ENCODE measurements at regions of chr1 and their contacts with region 1.

Region 1: DNA sequence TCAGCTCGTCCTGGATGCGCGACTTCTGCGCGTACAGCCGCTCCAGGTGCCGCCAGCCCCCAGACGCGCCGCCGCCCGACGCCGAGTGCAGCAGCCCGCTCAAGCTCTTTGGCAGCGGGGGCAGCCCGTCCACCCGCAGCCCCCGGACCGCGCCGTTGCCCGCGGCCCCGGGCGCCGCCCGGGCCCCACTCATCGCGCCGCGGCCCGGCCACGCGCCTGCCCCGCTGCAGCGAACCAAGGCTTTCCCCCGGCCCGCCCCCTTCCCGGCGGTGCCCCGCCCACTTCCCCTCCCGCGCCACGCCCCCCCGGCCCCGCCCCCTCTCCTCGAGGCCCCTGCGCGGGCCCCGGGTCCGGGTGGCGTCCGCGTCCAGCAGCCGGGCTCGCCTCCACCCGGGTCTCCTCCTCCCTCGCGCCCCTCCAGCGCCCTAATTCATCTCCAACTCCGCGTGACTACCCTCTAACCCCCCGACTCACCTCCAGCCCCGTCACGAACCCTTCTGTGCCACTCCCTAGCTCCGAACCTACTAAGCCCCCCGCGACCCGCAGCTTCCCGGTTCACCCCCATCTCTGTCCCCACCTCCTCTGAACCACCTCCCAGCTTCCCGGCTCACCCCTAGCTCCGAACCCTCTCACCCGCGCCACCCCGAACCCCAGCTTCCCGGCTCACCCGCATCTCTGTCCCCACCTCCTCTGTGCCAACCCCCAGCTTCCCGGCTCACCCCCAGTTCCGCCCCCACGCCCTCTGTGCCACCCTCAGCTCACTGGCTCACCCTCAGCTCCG is at the start of gene FAM89A:
- DNase-seq: peak; percentile 81
- H3K4me3 Mint-ChIP-seq: peak within 1 kb of the TSS; percentile 74
- H3K27ac Mint-ChIP-seq: no peak within 1 kb of the TSS
- H3K4me1 Mint-ChIP-seq: peaks cover 29% of the 10 kb centered on the region
- H3K27me3 Mint-ChIP-seq: no peaks in the 10 kb centered on the region
- total RNA-seq, gene FAM89A: 14.3 to 15.1 TPM

Region 2: DNA sequence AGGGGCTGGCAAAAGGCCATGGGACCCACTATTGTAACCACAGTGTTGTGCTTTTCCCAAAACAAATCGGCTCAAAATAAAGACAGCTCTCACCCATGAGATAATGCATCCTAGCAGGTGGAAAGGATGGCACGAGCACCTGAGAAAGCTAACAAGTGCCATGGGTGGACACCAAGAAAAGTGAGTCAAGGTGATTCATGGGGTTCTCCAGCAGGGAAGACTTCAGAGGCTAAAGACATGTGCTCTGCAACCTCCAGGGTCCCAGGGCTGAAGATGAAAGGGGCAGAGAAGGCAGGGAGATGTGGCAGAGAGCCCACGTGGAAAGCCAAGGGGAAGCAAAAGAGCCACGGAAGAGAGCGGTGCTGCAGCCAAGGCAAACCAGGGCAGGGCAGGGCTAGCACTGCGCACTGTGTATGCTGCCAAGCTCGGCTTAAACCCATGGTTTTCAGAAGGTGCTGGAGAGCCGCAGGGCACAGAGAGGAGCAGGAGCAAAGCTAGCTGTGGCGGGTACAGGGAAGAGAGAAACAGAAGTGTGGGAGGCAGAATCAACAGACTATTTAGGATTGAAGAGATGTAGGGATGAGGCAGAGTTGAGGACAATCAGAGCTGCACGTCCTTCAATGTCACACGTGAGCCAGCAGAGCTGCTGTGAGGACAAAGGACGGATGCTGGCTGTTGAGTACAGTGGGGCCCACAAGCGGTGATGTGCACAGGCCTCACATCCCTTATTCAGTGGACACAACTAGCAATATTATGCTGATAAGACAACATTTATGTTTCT is 130.0 kb before region 1 on chr1:
- CTCF ChIA-PET with region 1: no interaction called
- POLR2A ChIA-PET with region 1: no interaction called
- intact Hi-C with region 1: no loop called
- DNase-seq: no peak
- H3K4me3 Mint-ChIP-seq: no peak overlapping the region
- H3K27ac Mint-ChIP-seq: no peak overlapping the region
- H3K4me1 Mint-ChIP-seq: no peaks in the 10 kb centered on the region
- H3K27me3 Mint-ChIP-seq: no peaks in the 10 kb centered on the region

Region 3: DNA sequence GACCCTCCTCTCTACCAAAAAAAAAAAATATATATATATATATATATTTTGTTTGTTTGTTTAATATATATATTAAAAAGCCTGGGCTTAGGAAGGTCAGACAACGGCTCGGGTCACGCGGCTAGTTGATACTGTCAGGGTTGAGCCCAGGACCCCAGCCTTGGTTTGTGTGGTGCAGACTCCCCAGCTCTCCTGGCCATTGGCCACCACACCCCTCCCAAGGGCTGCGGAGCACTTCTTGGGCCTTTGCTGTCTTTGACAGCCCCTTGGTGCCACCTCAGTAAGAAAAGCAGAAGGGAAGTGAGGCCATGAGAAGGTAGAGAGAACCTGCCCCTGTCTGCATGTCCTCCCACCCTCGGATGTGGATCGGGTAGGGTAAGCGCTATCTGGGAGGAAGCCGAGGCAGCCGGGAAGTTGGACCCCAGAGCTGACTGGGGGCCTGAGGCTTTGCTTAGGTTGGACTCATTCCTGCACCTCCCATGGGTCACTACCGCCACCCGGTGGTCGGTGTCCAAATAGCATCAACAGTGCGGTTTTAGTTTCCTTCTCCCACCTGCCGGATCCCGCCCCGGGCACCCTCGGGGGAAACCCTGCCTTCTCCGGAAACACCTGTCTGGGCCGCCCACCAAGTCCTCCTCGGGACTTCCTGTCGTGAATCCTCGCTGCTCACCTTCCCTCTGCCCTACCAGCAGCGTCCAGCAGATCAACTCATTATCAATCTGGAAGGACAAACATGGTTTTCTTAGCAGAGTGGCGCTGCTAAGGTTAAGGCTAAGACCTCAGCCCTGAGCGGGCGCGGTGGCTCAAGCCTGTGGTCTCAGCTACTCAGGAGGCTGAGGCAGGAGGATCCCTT is 171.0 kb after region 1 on chr1:
- CTCF ChIA-PET with region 1: interaction called, 3 read pairs
- POLR2A ChIA-PET with region 1: no interaction called
- intact Hi-C with region 1: loop called (anchors 10 kb)
- DNase-seq: peak; percentile 96
- H3K4me3 Mint-ChIP-seq: peak overlapping the region; percentile 76
- H3K27ac Mint-ChIP-seq: peak overlapping the region; percentile 51
- H3K4me1 Mint-ChIP-seq: peaks cover 11% of the 10 kb centered on the region
- H3K27me3 Mint-ChIP-seq: no peaks in the 10 kb centered on the region

Measured in activated CD4-positive, alpha-beta memory T cell treated with anti-CD3 and anti-CD28 coated beads for 36 hours (primary cell).